ENCODE measurements at regions of chr2 and their contacts with region 1.

Region 1: GRCh38 chr2:56009758-56010458 is 86.3 kb upstream of the EFEMP1 start:
- DNase-seq: no peak
- ATAC-seq: peak in 3 of 4 donors; percentile 56 to 84 (median 78)
- H3K4me3 ChIP-seq: no peak overlapping the region
- H3K27ac ChIP-seq: no peak overlapping the region
- H3K4me1 ChIP-seq: peaks cover 0 to 11% (median 5%) of the 10 kb centered on the region in 3 donors
- H3K27me3 ChIP-seq: no peaks in the 10 kb centered on the region
- CTCF ChIP-seq: peak in 2 of 4 donors; percentile 32 to 40

Region 2: DNA sequence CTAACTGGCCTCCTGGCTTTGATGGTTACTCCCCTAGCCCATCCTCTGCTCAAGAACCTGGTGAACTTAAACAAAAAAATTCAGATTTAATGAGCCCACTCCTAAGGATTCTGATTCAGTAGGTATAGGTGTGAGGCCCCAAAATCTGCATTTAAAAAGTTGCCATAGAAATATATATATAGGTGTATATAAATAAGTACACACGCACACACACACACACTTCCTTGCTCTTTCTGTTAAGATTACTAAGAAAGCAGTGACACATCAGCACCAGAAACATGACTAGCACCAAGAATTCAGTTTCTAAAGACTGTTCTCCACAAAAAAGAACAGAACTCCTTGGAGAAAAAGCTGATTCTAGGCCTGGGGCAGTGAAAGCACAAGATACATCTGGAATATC is 1268.7 kb before region 1 on chr2:
- intact Hi-C with region 1: no loop called
- DNase-seq: no peak
- ATAC-seq: no peak
- H3K4me3 ChIP-seq: no peak overlapping the region
- H3K27ac ChIP-seq: no peak overlapping the region
- H3K4me1 ChIP-seq: peaks cover 0 to 8% (median 0%) of the 10 kb centered on the region in 3 donors
- H3K27me3 ChIP-seq: no peaks in the 10 kb centered on the region
- CTCF ChIP-seq: no peak

Region 3: GRCh38 chr2:55718165-55719008 is 291.5 kb before region 1 on chr2:
- intact Hi-C with region 1: loop called in 1 of 3 experiments (anchors 10 kb)
- DNase-seq: peak in 3 of 6 donors; percentile 21 to 61 (median 45)
- ATAC-seq: peak; percentile 63 to 82 (median 76)
- H3K4me3 ChIP-seq: no peak overlapping the region
- H3K27ac ChIP-seq: no peak overlapping the region
- H3K4me1 ChIP-seq: no peaks in the 10 kb centered on the region
- H3K27me3 ChIP-seq: no peaks in the 10 kb centered on the region
- CTCF ChIP-seq: peak; percentile 41 to 66 (median 62)